T-cell (primary cell): ENCODE measurements at regions of chr1 and their contacts with region 1.

Region 1: DNA sequence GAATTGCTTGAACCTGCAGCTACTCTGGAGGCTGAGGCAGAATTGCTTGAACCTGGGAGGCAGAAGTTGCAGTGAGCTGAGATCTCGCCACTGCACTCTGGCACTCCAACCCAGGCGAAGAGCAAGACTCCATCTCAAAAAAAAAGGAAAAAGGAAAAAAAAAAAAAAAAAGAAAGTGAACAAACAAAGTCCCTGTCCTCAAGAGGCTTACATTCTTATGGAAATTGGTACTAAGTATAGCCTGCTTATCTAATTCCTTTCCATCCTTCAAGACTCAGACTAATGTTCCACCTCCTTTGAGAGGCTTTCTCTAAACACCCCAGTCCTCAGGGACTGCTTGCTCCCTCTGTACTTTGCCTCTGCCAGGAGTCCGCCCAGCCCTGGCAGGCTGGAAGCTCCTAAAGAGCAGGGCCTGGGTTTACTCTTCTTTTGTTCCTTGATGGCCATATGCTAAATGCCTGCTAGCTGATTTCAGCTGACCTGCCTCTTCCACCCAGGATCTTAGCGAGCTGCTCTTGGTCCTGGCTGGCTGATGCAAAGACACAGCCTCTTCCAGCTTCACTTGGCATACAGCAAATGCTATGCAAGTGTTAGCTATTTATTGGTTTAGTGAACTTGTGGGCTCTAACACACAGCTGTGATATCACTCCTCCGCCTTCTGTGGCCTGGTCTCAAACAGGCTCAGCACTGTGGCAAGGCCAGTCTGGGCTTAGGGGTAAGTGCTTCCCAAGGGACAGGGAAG is 9.8 kb downstream of the SLC9A1 start:
- DNase-seq: no peak
- ATAC-seq: no peak
- H3K4me3 ChIP-seq: no peak overlapping the region
- H3K4me3 Mint-ChIP-seq: no peak overlapping the region
- H3K27ac ChIP-seq: no peak overlapping the region
- H3K27ac Mint-ChIP-seq: peak overlapping the region in 1 of 2 donors; percentile 52
- H3K4me1 ChIP-seq: peaks cover 30 to 43% of the 10 kb centered on the region in 2 experiments
- H3K4me1 Mint-ChIP-seq: peaks cover 54 to 71% (median 60%) of the 10 kb centered on the region in 3 donors
- H3K27me3 ChIP-seq: no peaks in the 10 kb centered on the region
- H3K27me3 Mint-ChIP-seq: no peaks in the 10 kb centered on the region

Region 2: DNA sequence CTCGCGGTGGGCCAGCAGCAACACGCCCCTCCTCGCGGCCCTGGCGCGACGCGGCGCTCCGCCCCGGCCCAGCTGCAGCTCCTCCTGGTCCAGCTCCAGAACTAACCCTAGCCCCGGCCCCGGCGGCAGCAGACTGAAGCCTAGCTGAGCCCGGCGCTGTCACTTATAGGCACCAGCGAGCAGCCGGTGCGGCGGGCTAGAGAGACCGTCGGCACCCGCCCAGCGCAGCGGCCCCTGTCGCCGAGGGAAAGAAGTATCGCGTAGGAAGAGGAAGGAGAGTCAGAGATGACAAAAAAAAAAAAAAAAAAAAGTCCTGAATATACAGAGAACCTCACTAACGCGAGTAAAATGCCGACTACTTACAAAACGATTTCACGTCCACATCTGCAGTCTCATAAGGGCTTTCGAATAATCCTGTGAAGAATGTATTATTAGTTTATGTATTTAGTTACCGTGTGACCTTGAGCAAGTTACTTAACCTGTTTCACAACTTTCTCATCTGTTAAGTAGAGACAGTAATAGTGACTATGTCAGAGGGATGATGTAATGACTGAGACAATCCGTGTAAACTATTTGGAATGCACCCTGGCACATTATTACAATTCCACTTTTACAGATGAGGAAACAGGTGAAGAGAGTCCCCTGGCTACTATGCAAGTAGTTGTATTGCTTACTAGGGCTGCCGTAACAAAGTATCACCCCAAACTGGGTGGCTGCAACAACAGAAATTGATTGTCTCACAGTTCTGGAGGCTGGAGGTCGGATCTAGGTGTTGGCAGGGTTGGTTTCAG is 10.1 kb after region 1 on chr1 and contains the start of gene SLC9A1:
- CTCF ChIA-PET with region 1: interaction called in 1 of 2 experiments, 5 read pairs
- POLR2A ChIA-PET with region 1: interaction called, 6 to 23 read pairs
- DNase-seq: peak; percentile 85 to 96 (median 91)
- ATAC-seq: peak; percentile 91 to 98 (median 97)
- H3K4me3 ChIP-seq: peak within 1 kb of the TSS; percentile 84 to 95
- H3K4me3 Mint-ChIP-seq: peak within 1 kb of the TSS; percentile 84 to 93 (median 86)
- H3K27ac ChIP-seq: peak within 1 kb of the TSS; percentile 98
- H3K27ac Mint-ChIP-seq: peak within 1 kb of the TSS; percentile 96 to 100
- H3K4me1 ChIP-seq: peaks cover 15 to 44% of the 10 kb centered on the region in 2 experiments
- H3K4me1 Mint-ChIP-seq: peaks cover 48 to 55% (median 49%) of the 10 kb centered on the region in 3 donors
- H3K27me3 ChIP-seq: no peaks in the 10 kb centered on the region
- H3K27me3 Mint-ChIP-seq: no peaks in the 10 kb centered on the region
- total RNA-seq, gene SLC9A1: 14.6 to 24.4 (median 18.5) TPM

Region 3: DNA sequence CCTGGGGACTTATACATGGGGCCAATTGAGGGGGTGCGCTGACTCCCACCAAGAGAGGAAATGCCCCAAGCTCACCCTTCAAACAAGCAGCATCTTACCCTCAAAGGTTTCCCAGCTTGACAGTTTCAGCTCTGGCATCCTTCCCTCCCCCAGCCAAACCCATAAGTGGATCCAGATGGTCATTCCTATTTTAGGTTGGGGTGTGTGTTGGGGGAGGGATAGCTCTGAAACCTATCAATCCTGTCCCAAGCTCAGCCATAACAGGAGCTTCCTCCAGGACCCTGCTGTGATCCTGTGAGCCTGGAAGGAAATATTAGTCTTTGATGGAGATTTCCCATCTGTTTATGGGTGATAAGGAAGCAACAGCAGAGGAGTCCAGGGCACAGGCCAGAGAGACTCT is 173.5 kb after region 1 on chr1:
- CTCF ChIA-PET with region 1: no interaction called
- POLR2A ChIA-PET with region 1: no interaction called
- DNase-seq: no peak
- ATAC-seq: no peak
- H3K4me3 ChIP-seq: no peak overlapping the region
- H3K4me3 Mint-ChIP-seq: no peak overlapping the region
- H3K27ac ChIP-seq: no peak overlapping the region
- H3K27ac Mint-ChIP-seq: no peak overlapping the region
- H3K4me1 ChIP-seq: peaks cover 6 to 18% of the 10 kb centered on the region in 2 experiments
- H3K4me1 Mint-ChIP-seq: peaks cover 19 to 22% (median 20%) of the 10 kb centered on the region in 3 donors
- H3K27me3 ChIP-seq: peaks cover 0 to 5% of the 10 kb centered on the region in 2 experiments
- H3K27me3 Mint-ChIP-seq: peaks cover 3 to 12% of the 10 kb centered on the region in 2 donors

Region 4: GRCh38 chr1:27481994-27482620 is 337.0 kb after region 1 on chr1:
- CTCF ChIA-PET with region 1: no interaction called
- POLR2A ChIA-PET with region 1: interaction called in 1 of 2 experiments, 10 read pairs
- DNase-seq: no peak
- ATAC-seq: no peak
- H3K4me3 ChIP-seq: no peak overlapping the region
- H3K4me3 Mint-ChIP-seq: peak overlapping the region in 1 of 3 donors; percentile 8
- H3K27ac ChIP-seq: no peak overlapping the region
- H3K27ac Mint-ChIP-seq: peak overlapping the region in 1 of 2 donors; percentile 40
- H3K4me1 ChIP-seq: peaks cover 8 to 34% of the 10 kb centered on the region in 2 experiments
- H3K4me1 Mint-ChIP-seq: peaks cover 60 to 73% (median 66%) of the 10 kb centered on the region in 3 donors
- H3K27me3 ChIP-seq: no peaks in the 10 kb centered on the region
- H3K27me3 Mint-ChIP-seq: no peaks in the 10 kb centered on the region